Activated T-helper 1 cell treated with anti-CD3 and anti-CD28 coated beads, Interleukin-12 subunit alpha, Interleukin-12 subunit beta, Interleukin-2, Interleukin-4 antibody, amounts not matched to agents 30 ng/mL and 10 ng/mL and 1 ng/mL, durations not matched to agents 14 hours and 24 hours and 36 hours (primary cell): ENCODE measurements at regions of chr9 and their contacts with region 1.

Region 1: DNA sequence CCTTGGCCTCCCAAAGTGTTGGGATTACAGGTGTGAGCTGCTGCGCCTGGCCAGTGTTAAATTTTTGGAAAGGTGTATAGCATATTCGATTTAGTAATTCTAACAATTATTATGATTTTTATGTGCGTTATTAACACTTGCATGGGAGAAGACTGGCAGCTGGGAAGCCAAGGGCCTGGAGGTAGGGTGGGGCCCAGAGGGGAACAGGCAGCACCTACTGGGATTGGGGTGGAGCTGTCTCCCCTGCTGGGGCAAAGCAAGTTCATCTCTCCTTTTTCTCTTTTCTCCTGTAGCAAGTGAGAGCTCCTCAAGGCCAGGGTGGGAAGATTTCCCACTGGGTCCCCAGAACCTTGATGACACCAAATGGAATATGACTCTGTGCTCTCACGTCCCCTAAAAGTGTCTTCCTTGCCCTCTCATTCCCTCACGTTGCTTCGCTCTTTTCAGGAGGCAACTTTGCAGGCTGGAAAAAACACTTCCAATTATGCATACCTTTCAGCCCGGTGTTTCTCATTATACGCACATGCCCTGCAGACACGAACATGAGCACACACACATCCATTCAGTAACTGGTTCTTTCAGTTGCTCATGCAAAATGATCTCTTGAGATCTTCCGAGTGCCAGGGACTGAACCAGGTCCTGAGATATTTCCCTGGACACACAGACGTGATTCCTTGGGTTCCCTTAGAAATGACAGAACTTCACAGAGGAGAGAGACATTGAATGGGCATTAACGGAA is 23.1 kb upstream of the LHX2 start:
- DNase-seq: no peak
- H3K4me3 Mint-ChIP-seq: no peak overlapping the region
- H3K27ac Mint-ChIP-seq: no peak overlapping the region
- H3K4me1 Mint-ChIP-seq: no peaks in the 10 kb centered on the region
- H3K27me3 Mint-ChIP-seq: peaks cover 16% of the 10 kb centered on the region

Region 2: DNA sequence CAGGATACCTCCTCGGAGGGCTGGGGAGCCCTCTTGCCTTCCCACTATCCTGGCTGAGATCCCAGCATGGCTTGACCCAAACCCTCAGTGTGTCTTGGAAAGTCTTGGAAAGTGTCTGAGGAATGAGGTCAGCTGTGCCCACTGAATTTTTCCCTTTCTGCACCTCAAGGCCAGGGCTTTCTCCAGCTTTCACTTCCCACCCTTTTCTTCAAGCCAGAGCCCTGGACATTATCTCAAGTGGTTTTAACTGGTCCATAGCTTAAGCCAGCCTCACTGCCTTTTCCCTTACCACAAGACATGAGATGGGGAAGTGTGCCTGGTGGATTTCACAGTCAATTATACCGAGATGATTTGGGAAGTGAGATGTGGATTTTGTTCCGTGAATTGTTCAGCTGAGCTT is 12.6 kb before region 1 on chr9:
- intact Hi-C with region 1: loop called (anchors 2 kb)
- DNase-seq: no peak
- H3K4me3 Mint-ChIP-seq: no peak overlapping the region
- H3K27ac Mint-ChIP-seq: no peak overlapping the region
- H3K4me1 Mint-ChIP-seq: no peaks in the 10 kb centered on the region
- H3K27me3 Mint-ChIP-seq: no peaks in the 10 kb centered on the region

Region 3: GRCh38 chr9:124022201-124023121 is 34.0 kb after region 1 on chr9:
- intact Hi-C with region 1: no loop called
- DNase-seq: no peak
- H3K4me3 Mint-ChIP-seq: no peak overlapping the region
- H3K27ac Mint-ChIP-seq: no peak overlapping the region
- H3K4me1 Mint-ChIP-seq: no peaks in the 10 kb centered on the region
- H3K27me3 Mint-ChIP-seq: peaks cover 62% of the 10 kb centered on the region